Panc1 (cell line): ENCODE measurements at regions of chr12 and their contacts with region 1.

Region 1: DNA sequence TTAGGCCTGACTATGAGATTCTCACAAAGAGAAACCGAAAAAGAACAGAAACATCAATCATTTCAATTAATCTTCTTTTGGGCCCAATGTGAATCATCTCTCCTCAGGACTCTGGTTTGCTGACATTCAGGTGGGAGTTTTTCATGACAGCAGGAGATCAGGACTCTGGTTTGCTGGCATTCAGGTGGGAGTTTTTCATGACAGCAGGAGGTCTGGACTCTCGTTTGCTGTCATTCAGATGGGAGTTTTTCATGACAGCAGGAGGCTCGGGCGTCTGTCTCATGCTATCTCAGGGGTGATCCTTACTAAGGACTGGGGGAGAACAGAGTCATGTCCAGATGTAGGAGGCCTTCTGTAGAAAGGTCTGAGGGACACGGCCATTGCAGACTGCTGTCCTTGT is 40.1 kb upstream of the PARP11 start:
- DNase-seq: no peak
- ATAC-seq: no peak
- H3K4me3 ChIP-seq: no peak overlapping the region
- H3K27ac ChIP-seq: no peak overlapping the region
- H3K4me1 ChIP-seq: no peaks in the 10 kb centered on the region
- H3K27me3 ChIP-seq: peaks cover 4% of the 10 kb centered on the region; the same call in 1 of the 2 replicates
- CTCF ChIP-seq: no peak

Region 2: GRCh38 chr12:3809347-3810015 is 103.8 kb before region 1 on chr12:
- CTCF ChIA-PET with region 1: no interaction called
- POLR2A ChIA-PET with region 1: no interaction called
- in situ Hi-C with region 1: no loop called
- intact Hi-C with region 1: no loop called
- DNase-seq: no peak
- ATAC-seq: no peak
- H3K4me3 ChIP-seq: no peak overlapping the region
- H3K27ac ChIP-seq: no peak overlapping the region
- H3K4me1 ChIP-seq: no peaks in the 10 kb centered on the region
- H3K27me3 ChIP-seq: no peaks in the 10 kb centered on the region
- CTCF ChIP-seq: no peak

Region 3: GRCh38 chr12:3885277-3886094 is 27.8 kb before region 1 on chr12:
- CTCF ChIA-PET with region 1: no interaction called
- POLR2A ChIA-PET with region 1: interaction called, 10 read pairs
- in situ Hi-C with region 1: no loop called
- intact Hi-C with region 1: no loop called
- DNase-seq: peak; percentile 20
- ATAC-seq: no peak
- H3K4me3 ChIP-seq: no peak overlapping the region
- H3K27ac ChIP-seq: no peak overlapping the region
- H3K4me1 ChIP-seq: no peaks in the 10 kb centered on the region
- H3K27me3 ChIP-seq: peaks cover 6% of the 10 kb centered on the region
- CTCF ChIP-seq: peak; percentile 76

Region 4: GRCh38 chr12:4119157-4119761 is 206.0 kb after region 1 on chr12:
- CTCF ChIA-PET with region 1: no interaction called
- POLR2A ChIA-PET with region 1: no interaction called
- in situ Hi-C with region 1: no loop called
- intact Hi-C with region 1: no loop called
- DNase-seq: no peak
- ATAC-seq: no peak
- H3K4me3 ChIP-seq: no peak overlapping the region
- H3K27ac ChIP-seq: no peak overlapping the region
- H3K4me1 ChIP-seq: no peaks in the 10 kb centered on the region
- H3K27me3 ChIP-seq: no peaks in the 10 kb centered on the region; the same call in 1 of the 2 replicates
- CTCF ChIP-seq: no peak